ENCODE measurements at regions of chr5 and their contacts with region 1.

Region 1: DNA sequence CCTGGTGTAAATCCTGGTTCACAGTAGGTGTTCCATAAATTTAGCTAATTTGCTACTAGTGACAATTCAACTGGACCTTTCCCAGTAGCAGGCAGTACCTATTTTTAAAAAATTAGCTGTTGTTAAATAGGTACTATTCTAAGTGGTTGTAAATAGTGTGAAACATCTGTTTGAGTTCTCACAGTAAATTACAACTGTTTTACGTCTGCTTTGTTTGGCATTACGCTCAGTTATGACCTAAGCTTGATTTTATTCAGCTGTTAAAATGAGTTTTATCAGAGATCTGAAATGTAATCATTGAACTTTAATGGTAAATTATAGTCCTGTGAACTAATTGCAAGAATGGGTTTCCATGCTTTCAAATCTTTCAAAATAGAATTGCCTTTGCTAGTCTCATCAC is 93.9 kb downstream of the GPBP1 start:
- DNase-seq: no peak
- H3K4me3 ChIP-seq: no peak overlapping the region
- CTCF ChIP-seq: no peak

Region 2: GRCh38 chr5:56909294-56910209 is 358.3 kb before region 1 on chr5 and contains the start of gene SETD9:
- in situ Hi-C with region 1: loop called (anchors 25 kb)
- DNase-seq: peak; percentile 93
- H3K4me3 ChIP-seq: peak within 1 kb of the TSS; percentile 61
- CTCF ChIP-seq: no peak

Region 3: DNA sequence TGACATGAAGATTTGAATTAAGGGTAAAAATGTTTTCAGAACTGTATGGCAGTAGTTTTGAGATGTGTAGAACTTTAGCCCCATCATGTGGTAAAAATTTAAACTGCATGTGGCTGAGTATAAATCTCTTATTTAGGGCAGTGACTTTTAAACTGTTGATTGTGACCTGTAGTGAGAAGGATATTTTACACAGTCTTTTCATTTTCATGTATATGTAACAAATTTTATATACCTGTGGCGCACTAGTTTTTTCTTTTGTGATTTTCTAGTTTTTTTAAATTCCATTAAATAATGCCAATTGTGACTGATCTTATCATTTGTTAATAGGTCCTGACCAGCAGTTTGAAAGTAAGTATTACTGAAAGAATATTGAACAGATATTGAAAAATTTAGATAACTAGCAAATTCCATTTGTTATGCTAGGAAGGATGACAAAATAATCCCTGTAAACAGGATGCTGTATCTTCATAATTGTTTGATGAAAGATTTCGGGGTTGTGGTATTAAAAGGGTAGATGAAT is 46.7 kb before region 1 on chr5:
- in situ Hi-C with region 1: no loop called
- DNase-seq: peak; percentile 47
- H3K4me3 ChIP-seq: no peak overlapping the region
- CTCF ChIP-seq: peak; percentile 44

Region 4: DNA sequence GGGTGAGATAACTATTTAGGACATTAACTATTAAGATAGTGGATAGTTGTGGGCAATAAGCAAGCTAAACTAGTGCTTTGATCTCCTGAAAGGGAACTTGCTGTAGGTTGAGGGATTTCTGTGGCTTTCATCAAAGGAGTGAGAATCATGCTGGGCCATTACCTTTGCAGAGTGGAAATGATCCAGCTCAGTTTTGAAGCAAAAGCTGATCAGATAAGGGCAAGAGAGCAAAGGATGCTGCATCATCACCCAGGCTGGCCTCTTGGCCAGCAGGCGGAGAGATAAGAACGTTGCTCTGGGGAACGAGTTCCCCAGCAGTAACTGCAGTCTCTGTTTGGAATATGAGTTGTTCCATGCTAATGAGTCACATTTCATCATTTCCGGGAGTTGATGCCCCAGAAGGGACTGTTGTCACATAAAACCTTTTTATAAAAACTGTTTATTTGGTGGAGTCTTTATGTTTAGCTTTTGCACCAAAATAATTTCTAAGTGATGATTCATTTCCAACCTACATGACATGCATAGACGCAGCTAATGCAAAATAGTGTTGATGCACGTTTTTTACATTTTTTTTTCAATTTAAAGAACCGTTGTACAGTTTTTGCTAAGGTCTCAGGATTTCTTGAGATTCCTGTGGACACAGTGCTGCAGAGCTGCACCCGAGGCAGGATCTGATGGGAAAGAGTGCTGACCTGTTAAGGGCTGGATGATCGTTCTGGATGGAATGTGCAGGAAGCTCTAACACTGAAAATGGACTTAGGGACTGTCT is 115.5 kb after region 1 on chr5:
- in situ Hi-C with region 1: no loop called
- DNase-seq: no peak
- H3K4me3 ChIP-seq: no peak overlapping the region
- CTCF ChIP-seq: peak; percentile 42